ENCODE measurements at regions of chr4 and their contacts with region 1.

Region 1: DNA sequence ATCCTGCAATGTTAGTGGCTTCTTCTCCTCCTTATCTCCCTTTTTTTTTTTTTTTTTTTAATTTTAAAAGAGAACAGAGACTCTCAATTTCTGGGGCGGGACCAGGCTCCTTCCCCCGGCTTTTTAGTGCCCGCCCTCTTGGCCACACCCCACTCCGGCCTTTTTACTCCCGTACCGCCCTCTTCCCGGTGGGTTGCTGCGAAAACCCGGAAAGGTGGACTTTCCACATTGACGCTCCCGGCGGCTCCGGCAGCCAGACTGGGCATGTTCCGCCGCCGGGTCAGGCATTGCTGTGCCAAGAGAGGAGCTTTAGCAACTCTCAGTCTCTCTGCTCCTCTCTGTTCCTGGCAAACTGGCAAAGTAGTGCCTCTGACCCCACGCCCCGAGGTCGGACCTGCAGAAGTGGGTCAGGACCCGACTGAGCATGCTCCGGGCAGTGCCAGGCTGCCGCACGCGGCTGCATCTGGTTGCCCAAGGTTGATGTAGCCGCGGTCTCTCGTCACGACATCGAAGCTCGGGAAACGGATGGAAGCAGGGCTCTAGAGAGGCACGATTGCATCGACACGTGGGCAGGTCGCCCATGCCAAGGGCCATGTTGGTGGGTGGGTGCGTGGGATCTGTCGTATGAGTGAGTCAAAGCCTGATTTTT is 1.1 kb upstream of the MFAP3L start:
- DNase-seq: peak; percentile 95

Region 2: GRCh38 chr4:169612871-169613859 is 414.1 kb before region 1 on chr4:
- intact Hi-C with region 1: loop called (anchors 2 kb)
- DNase-seq: no peak

Region 3: GRCh38 chr4:169757575-169758184 is 269.6 kb before region 1 on chr4 and contains the start of gene HPF1:
- intact Hi-C with region 1: loop called (anchors 2 kb)
- DNase-seq: peak; percentile 96
- total RNA-seq, gene HPF1: 18.0 TPM

Region 4: DNA sequence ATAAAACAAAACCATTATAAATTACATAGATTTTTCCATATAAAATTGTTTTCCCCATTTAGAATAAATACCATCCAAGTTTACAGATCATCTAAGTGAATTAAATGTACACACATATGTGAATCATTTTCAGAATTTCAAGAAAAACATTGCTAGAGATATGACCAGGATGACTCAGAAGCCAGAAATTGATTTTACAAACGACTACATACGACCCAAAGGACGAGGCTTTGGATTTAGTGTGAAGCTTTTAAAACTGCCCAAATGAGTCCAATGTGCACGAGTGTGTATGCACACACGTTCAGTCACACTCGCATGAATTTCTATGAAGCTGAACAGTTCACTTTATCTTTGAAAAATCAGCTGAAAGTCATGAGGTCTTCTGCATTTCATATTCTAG is 39.1 kb before region 1 on chr4:
- intact Hi-C with region 1: no loop called
- DNase-seq: no peak

Region 5: DNA sequence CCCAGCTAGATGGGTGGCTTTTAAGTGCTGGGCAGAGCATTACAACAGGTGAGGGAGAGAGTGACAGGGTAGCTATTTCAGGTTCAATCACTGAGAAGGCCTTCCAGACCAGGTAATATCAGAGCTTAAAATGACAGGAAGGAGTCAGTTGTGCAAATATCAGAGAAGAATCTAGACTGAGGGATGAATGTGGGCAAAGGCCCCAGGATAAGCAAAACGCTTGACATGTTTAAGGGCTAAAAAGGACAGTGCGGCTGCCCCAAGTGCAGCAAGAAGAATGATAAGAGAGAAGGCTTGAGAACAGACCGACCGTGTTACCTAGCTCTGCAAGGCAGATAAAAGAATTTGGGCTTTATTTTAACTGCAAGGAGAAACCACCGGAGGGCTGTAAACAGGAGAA is 43.9 kb after region 1 on chr4:
- intact Hi-C with region 1: no loop called
- DNase-seq: no peak

Region 6: GRCh38 chr4:170259631-170260153 is 232.4 kb after region 1 on chr4:
- intact Hi-C with region 1: no loop called
- DNase-seq: no peak